K562 (cell line): ENCODE measurements at regions of chr20 and their contacts with region 1.

Region 1: DNA sequence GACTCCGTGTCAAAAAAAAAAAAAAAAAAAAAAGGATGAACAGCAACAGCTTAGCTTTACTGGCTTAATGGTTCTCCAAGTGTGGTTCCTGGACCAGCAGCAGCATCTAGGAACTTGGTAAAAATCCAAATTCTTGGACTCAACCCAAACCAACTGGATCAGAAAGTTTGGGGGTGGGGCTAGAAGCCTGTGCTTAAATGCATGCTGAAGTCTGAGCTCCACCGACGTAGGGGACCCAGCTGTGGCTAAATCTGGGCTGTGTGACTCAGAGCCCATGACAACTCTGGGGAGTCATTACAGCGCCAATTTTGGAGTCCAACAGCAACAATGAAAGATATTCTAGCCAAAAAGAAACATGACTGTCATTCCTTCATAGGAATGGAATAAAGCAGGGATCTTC is 13.6 kb upstream of the CHD6 start:
- DNase-seq: no peak
- ATAC-seq: peak; percentile 56; the same call in 2 of the 3 replicates
- H3K4me3 ChIP-seq: no peak overlapping the region
- H3K27ac ChIP-seq: no peak overlapping the region
- H3K4me1 ChIP-seq: peaks cover 0 to 16% of the 10 kb centered on the region in 2 experiments; a peak in 2 of 5 replicates
- H3K27me3 ChIP-seq: no peaks in the 10 kb centered on the region
- CTCF ChIP-seq: no peak
- EP300 ChIP-seq: no peak
- POLR2A ChIP-seq: no peak
- RAD21 ChIP-seq: no peak

Region 2: DNA sequence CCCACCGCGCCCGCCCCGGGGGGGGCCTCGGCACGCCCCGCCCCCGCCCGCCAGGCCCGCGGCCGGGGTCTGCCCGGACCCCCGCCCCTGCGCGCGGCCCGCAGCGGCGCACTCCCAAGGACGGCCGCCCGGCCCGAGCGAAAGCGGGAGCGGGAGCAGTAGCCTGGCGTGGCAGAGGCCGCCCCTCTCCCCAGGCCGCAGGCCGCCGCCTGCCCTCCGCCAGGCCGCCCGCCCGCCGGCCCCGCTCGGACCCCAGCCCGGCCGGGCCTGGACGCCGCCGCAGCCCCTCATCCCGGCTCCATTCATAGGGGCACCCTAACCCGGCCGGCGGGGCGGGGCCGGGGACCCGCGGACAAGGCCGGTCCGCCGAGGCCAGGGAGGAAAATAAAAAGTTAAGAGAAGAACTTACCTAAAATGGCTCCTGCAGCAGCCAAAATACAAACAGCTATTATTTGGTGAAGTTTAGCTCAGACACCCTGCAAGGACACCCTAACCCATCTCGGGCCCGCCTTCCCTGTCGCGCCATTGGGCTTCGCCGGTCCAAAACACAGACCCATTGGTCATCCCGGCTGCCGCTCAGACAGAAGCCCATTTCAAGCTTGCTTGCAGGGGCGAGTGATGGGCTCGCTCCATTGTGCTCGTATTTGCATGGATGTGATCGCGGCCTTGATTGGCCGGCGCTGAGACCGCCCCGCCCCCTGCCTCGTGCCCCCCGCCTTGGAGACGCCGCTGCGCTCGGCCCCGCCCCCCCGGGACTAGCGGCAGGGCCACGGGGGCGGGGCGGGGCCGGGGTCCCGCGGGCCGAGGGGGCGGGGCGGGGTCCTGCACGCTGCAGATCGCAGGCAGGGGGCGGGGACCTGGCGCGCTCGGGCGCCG is 13.7 kb before region 1 on chr20 and contains the start of gene CHD6:
- CTCF ChIA-PET with region 1: no interaction called
- POLR2A ChIA-PET with region 1: interaction called, 10 read pairs
- in situ Hi-C with region 1: no loop called
- intact Hi-C with region 1: no loop called
- DNase-seq: peak; percentile 97 to 100 (median 98)
- ATAC-seq: peak; percentile 99
- H3K4me3 ChIP-seq: peak within 1 kb of the TSS; percentile 96
- H3K27ac ChIP-seq: peak within 1 kb of the TSS; percentile 90
- H3K4me1 ChIP-seq: peaks cover 5 to 21% of the 10 kb centered on the region in 2 experiments
- H3K27me3 ChIP-seq: no peaks in the 10 kb centered on the region; a peak in 1 of 5 replicates
- CTCF ChIP-seq: no peak
- EP300 ChIP-seq: no peak
- POLR2A ChIP-seq: peak; percentile 71
- RAD21 ChIP-seq: no peak
- polyA plus RNA-seq, gene CHD6: 3.9 to 10.9 TPM